AG04450 (cell line): ENCODE measurements at regions of chr4 and their contacts with region 1.

Region 1: GRCh38 chr4:4440333-4441061 is 53.6 kb downstream of the NSG1 start:
- DNase-seq: no peak
- H3K4me3 ChIP-seq: no peak overlapping the region
- H3K27ac ChIP-seq: no peak overlapping the region
- H3K27me3 ChIP-seq: no peaks in the 10 kb centered on the region
- CTCF ChIP-seq: no peak

Region 2: GRCh38 chr4:4368809-4369580 is 71.5 kb before region 1 on chr4:
- CTCF ChIA-PET with region 1: no interaction called
- POLR2A ChIA-PET with region 1: no interaction called
- DNase-seq: no peak
- H3K4me3 ChIP-seq: no peak overlapping the region
- H3K27ac ChIP-seq: no peak overlapping the region
- H3K27me3 ChIP-seq: peaks cover 13% of the 10 kb centered on the region
- CTCF ChIP-seq: no peak

Region 3: DNA sequence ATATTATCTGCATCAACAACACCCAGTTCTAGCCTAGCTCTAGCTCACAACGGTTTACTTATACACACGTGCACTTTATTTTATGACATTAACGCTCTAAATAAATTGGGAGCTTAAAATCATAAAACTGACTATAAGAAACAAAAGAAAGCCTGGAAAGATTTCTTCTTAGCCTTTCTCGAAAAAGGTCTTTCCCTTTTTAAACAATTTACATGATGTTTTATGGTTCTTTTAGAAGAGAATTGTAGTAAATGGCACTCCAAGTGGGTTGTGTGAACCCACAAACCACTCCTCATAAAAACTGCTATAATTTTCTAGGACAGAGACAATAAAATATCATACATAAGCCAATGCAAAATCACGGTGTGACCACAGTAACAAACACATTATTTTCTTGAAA is 78.2 kb after region 1 on chr4:
- CTCF ChIA-PET with region 1: interaction called, 14 read pairs
- POLR2A ChIA-PET with region 1: no interaction called
- DNase-seq: no peak
- H3K4me3 ChIP-seq: no peak overlapping the region
- H3K27ac ChIP-seq: no peak overlapping the region
- H3K27me3 ChIP-seq: no peaks in the 10 kb centered on the region
- CTCF ChIP-seq: no peak

Region 4: GRCh38 chr4:5051278-5052203 is 611.0 kb after region 1 on chr4 and contains the start of gene STK32B:
- CTCF ChIA-PET with region 1: no interaction called
- POLR2A ChIA-PET with region 1: no interaction called
- DNase-seq: peak; percentile 41
- H3K4me3 ChIP-seq: peak within 1 kb of the TSS; percentile 66
- H3K27ac ChIP-seq: no peak within 1 kb of the TSS
- H3K27me3 ChIP-seq: peaks cover 2% of the 10 kb centered on the region
- CTCF ChIP-seq: no peak
- polyA plus RNA-seq, gene STK32B: 4.0 and 4.3 TPM in 2 replicates